Head of caudate nucleus (tissue), 42 donors: ENCODE measurements at regions of chr6 and their contacts with region 1.

Region 1: GRCh38 chr6:12233693-12234571 is 56.2 kb upstream of the EDN1 start:
- DNase-seq: peak in 38 of 42 donors; percentile 13 to 86 (median 50)

Region 2: GRCh38 chr6:11653028-11653583 is 580.8 kb before region 1 on chr6:
- intact Hi-C with region 1: loop called (anchors 5 kb)
- DNase-seq: peak in 1 of 42 donors; percentile 12

Region 3: GRCh38 chr6:12011276-12012076 is 222.5 kb before region 1 on chr6:
- intact Hi-C with region 1: no loop called
- DNase-seq: peak; percentile 87 to 97 (median 92)

Region 4: DNA sequence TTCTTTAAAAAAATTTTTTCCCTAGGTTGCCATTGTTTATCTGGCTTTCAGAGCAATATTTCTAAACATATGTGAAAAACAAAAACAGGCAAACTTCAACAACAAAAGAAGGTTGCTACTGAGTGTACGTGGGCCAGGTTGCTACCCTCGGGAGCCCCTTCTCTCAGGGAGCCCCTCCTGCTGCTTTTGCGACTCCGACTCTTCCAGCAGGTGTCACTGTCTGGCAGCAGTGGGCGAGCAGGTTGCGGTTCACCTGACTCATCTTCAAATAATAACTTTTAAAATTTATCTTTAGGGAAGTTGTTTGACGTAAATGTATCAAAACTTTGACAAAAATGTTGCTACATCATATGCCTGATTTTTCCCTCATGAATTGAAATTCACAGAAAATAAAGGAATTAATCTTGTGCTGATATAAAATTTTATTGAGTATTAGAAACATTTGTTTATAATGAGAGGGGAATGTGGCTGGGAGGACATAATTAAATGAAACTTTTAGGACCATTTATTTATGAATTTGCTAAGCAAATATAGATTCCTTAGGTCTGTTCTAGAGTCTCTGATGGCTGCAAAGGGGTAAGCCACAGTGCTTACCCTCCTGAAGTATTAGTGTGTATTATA is 83.0 kb before region 1 on chr6:
- intact Hi-C with region 1: loop called (anchors 10 kb)
- DNase-seq: peak; percentile 46 to 83 (median 67)